Adrenal gland (tissue), 19 donors: ENCODE measurements at regions of chr12 and their contacts with region 1.

Region 1: DNA sequence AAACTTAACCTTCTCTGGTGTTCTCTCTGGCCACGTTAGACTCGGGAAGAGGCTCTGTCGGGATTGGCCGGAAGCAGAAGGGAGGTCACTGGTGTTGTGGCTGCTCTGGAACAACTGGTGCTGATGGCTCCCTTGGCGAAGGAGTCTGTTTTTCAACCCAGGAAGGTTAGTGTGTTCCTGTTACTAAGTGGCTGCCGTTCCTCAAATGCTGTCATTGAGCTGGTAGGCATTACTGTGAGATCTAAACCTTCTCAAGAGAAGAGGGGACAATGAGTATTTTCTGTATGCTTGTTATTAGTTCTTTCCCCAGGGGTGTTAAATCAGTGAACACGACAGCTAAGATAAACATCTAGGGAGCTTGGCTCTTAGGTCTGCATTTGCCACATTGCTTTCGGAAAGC is 18.3 kb downstream of the POP5 start:
- DNase-seq: peak in 2 of 7 donors; percentile 12 to 74
- H3K4me3 ChIP-seq: no peak overlapping the region
- H3K27ac ChIP-seq: peak overlapping the region in 2 of 5 donors; percentile 32 to 56
- H3K4me1 ChIP-seq: peaks cover 18 to 28% of the 10 kb centered on the region in 2 donors
- H3K27me3 ChIP-seq: no peaks in the 10 kb centered on the region
- CTCF ChIP-seq: no peak
- POLR2A ChIP-seq: no peak

Region 2: DNA sequence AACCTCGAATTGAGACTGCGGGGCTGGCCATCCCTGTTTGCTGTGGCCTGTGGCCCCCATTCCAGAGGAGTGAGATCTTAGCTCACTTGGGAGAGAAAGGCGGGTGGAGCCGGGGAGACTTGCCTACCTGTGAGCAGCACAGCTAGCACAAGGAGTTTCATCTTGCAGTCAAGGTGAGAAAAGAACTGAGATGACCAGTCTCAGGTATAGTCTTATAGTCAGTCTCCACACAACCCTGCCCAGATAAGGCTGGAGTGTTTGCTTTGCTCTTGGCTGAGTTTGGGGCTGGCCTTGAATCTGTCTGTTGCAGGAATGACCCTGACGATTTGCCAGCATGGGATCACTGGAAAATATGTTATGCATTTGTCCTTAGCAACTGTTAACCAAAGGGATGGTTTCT is 235.3 kb before region 1 on chr12 and contains the start of gene PLA2G1B:
- intact Hi-C with region 1: no loop called
- DNase-seq: peak; percentile 46 to 77 (median 56)
- H3K4me3 ChIP-seq: no peak within 1 kb of the TSS
- H3K27ac ChIP-seq: peak within 1 kb of the TSS in 3 of 5 donors; percentile 31 to 45 (median 32)
- H3K4me1 ChIP-seq: peaks cover 8 to 16% of the 10 kb centered on the region in 2 donors
- H3K27me3 ChIP-seq: no peaks in the 10 kb centered on the region
- CTCF ChIP-seq: no peak
- POLR2A ChIP-seq: no peak
- total RNA-seq, gene PLA2G1B: 1.3 to 17.2 (median 4.9) TPM in 8 of 9 donors, not detected in the other

Region 3: DNA sequence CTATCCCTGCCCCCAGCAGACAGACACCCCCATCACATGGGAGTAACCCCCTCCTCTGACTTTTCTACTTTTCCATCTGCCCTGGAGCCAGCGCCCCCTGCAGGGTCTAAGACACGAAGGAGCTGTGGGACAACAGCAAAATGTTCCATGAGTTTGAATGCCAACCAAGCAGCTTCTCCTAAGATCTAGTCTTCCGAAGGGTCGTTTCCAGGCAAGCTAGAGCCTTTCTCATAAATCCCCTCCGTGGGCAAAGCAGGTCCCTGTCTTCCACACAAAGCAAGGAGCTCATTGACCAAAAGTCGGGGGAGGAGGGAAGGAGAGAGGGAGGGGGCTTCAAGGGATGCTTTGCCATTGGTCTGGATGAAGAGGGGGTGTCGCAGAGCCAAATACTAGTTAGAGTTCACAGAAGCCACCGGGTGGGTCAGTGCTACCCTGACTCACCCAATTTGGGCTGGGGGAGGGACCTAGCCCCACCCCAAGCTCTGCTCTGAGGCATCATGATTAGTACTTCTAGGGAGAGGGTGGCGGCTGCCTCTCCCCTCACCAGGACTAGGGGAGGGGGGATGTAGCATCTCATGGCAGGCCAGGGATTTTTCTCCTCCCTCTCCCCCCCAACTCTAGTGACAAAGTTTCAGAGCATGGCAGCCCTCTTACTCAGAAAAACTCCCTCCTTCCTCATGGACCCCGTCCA is 195.5 kb before region 1 on chr12:
- intact Hi-C with region 1: no loop called
- DNase-seq: no peak
- H3K4me3 ChIP-seq: peak overlapping the region in 1 of 4 donors; percentile 83
- H3K27ac ChIP-seq: peak overlapping the region in 2 of 5 donors; percentile 67 to 68
- H3K4me1 ChIP-seq: peaks cover 11 to 17% of the 10 kb centered on the region in 2 donors
- H3K27me3 ChIP-seq: no peaks in the 10 kb centered on the region
- CTCF ChIP-seq: peak in 4 of 6 experiments; percentile 13 to 32 (median 22)
- POLR2A ChIP-seq: no peak

Region 4: DNA sequence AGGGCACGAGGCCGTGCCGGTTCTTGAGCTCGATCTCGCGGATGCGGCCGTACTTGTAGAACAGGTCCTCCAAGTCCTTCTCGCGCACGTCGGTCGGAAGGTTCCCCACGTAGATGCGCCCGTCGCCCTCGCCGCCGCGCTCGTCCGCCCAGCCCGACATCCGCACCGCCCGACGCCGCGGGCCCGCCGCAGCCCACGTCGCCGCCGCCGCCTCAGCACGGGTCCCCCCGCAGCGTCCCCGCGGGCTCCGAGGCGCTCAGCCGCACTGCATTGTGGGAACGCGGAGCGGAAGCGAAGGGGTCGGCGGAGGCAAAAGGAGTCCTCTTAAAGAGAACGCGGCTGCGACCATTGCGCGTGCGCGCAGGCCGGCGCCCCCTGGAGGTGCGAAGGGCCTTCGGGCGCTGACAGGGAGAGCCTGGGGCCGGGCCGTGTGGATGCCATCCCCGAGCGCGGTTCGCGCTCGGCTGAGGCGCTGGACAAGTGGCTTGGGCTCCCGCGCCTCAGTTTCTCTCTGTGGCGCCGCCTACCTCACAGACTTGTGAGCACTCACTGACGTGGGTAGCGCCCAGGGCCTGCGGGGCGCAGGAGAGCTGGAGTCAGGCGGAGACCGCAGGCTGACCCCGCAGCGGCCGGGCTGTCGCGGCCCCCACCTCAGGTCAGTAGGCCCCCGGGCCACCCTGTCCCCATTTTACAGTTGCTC is 93.3 kb before region 1 on chr12 and contains the start of gene SRSF9:
- intact Hi-C with region 1: loop called in 1 of 2 experiments (anchors 10 kb)
- DNase-seq: peak; percentile 95 to 97 (median 95)
- H3K4me3 ChIP-seq: peak within 1 kb of the TSS; percentile 67 to 87 (median 85)
- H3K27ac ChIP-seq: peak within 1 kb of the TSS; percentile 70 to 97 (median 93)
- H3K4me1 ChIP-seq: peaks cover 6 to 41% of the 10 kb centered on the region in 2 donors
- H3K27me3 ChIP-seq: no peaks in the 10 kb centered on the region
- CTCF ChIP-seq: peak; percentile 53 to 88 (median 78)
- POLR2A ChIP-seq: peak; percentile 77 to 82
- total RNA-seq, gene SRSF9: 55.5 to 206 (median 179) TPM